Naive thymus-derived CD4-positive, alpha-beta T cell (primary cell): ENCODE measurements at regions of chr1 and their contacts with region 1.

Region 1: DNA sequence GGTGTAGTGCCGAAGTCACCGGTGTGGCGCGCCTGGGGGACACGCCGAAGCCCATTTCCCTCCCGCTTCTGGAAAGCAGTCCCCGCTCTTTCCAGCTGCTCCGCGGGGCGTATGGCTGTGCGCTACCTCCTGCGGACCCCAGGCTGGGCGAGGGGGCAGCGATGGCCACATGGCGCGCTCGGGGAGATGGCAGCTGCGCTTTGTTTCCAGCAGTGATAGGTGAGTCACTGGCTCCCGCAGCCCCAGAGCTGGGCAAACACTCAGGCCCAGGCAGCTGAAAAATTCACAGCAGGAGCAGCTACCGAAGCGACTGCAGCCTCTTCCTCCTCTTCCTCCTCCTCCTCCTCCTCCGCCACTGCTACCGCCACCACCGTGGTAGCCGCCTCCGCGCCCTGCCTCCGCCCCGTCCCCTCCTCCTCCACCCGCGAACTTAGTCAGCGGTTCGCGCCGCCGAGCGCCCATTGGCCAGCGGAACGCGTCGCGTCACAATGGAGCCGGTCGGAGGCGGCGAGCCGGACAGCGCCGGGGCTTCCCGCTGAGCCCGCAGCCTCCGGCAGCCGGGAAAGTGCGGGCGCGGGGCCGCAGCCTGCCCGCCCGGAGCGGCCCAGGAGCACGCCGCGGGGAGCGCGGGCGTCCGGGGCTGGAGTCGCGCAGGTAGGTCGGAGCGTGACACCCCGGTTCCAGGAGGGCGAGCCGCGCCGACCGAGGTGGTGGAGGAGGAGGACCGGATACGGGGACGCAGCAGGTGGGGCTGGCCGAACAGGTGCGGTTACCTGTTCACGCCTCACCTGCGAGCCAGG is at the start of gene LRRC8B:
- DNase-seq: peak; percentile 80 to 91 (median 86)
- ATAC-seq: peak; percentile 94
- H3K4me3 ChIP-seq: peak within 1 kb of the TSS; percentile 93
- H3K4me3 Mint-ChIP-seq: peak within 1 kb of the TSS in 1 of 10 donors; percentile 76
- H3K27ac ChIP-seq: peak within 1 kb of the TSS; percentile 92
- H3K27ac Mint-ChIP-seq: peak within 1 kb of the TSS in 8 of 9 donors; percentile 89 to 97 (median 94)
- H3K4me1 ChIP-seq: peaks cover 7 to 34% of the 10 kb centered on the region in 2 donors
- H3K4me1 Mint-ChIP-seq: peaks cover 11 to 31% (median 21%) of the 10 kb centered on the region in 7 donors
- H3K27me3 ChIP-seq: no peaks in the 10 kb centered on the region
- H3K27me3 Mint-ChIP-seq: no peaks in the 10 kb centered on the region
- total RNA-seq, gene LRRC8B: 8.8 to 23.0 (median 17.1) TPM

Region 2: GRCh38 chr1:88683541-88684481 is 840.8 kb before region 1 on chr1 and contains the start of gene PKN2:
- CTCF ChIA-PET with region 1: no interaction called
- POLR2A ChIA-PET with region 1: no interaction called
- intact Hi-C with region 1: loop called in 1 of 2 experiments (anchors 1 kb)
- DNase-seq: peak; percentile 94 to 98 (median 97)
- ATAC-seq: peak; percentile 96
- H3K4me3 ChIP-seq: peak within 1 kb of the TSS; percentile 91
- H3K4me3 Mint-ChIP-seq: peak within 1 kb of the TSS; percentile 89 to 99 (median 97)
- H3K27ac ChIP-seq: peak within 1 kb of the TSS; percentile 89
- H3K27ac Mint-ChIP-seq: peak within 1 kb of the TSS; percentile 96 to 100 (median 97)
- H3K4me1 ChIP-seq: peaks cover 18 to 19% of the 10 kb centered on the region in 2 donors
- H3K4me1 Mint-ChIP-seq: peaks cover 18 to 53% (median 36%) of the 10 kb centered on the region in 7 donors
- H3K27me3 ChIP-seq: no peaks in the 10 kb centered on the region
- H3K27me3 Mint-ChIP-seq: peaks cover 0 to 12% (median 0%) of the 10 kb centered on the region in 5 donors
- total RNA-seq, gene PKN2: 32.1 to 53.8 (median 46.9) TPM

Region 3: GRCh38 chr1:89125913-89126580 is 398.5 kb before region 1 on chr1 and contains the start of gene GBP2:
- CTCF ChIA-PET with region 1: no interaction called
- POLR2A ChIA-PET with region 1: no interaction called
- intact Hi-C with region 1: loop called in 1 of 2 experiments (anchors 2 kb)
- DNase-seq: peak in 7 of 9 donors; percentile 35 to 72 (median 42)
- ATAC-seq: peak; percentile 82
- H3K4me3 ChIP-seq: peak within 1 kb of the TSS; percentile 84
- H3K4me3 Mint-ChIP-seq: peak within 1 kb of the TSS; percentile 88 to 100 (median 98)
- H3K27ac ChIP-seq: peak within 1 kb of the TSS; percentile 76
- H3K27ac Mint-ChIP-seq: peak within 1 kb of the TSS; percentile 94 to 100 (median 99)
- H3K4me1 ChIP-seq: peaks cover 30 to 32% of the 10 kb centered on the region in 2 donors
- H3K4me1 Mint-ChIP-seq: peaks cover 39 to 75% (median 63%) of the 10 kb centered on the region in 7 donors
- H3K27me3 ChIP-seq: no peaks in the 10 kb centered on the region
- H3K27me3 Mint-ChIP-seq: peaks cover 0 to 2% (median 0%) of the 10 kb centered on the region in 5 donors
- total RNA-seq, gene GBP2: 74.0 to 200 (median 185) TPM

Region 4: GRCh38 chr1:89545264-89546038 is 20.9 kb after region 1 on chr1:
- CTCF ChIA-PET with region 1: interaction called, 5 read pairs
- POLR2A ChIA-PET with region 1: interaction called, 3 read pairs
- intact Hi-C with region 1: loop called in 1 of 2 experiments (anchors 1 kb)
- DNase-seq: peak in 3 of 9 donors; percentile 4 to 58 (median 49)
- ATAC-seq: peak; percentile 32
- H3K4me3 ChIP-seq: no peak overlapping the region
- H3K4me3 Mint-ChIP-seq: peak overlapping the region in 8 of 10 donors; percentile 3 to 68 (median 28)
- H3K27ac ChIP-seq: no peak overlapping the region
- H3K27ac Mint-ChIP-seq: peak overlapping the region in 4 of 9 donors; percentile 1 to 78 (median 32)
- H3K4me1 ChIP-seq: peaks cover 0 to 18% of the 10 kb centered on the region in 2 donors
- H3K4me1 Mint-ChIP-seq: peaks cover 37 to 87% (median 66%) of the 10 kb centered on the region in 7 donors
- H3K27me3 ChIP-seq: no peaks in the 10 kb centered on the region
- H3K27me3 Mint-ChIP-seq: no peaks in the 10 kb centered on the region

Region 5: GRCh38 chr1:89605692-89606091 is 81.1 kb after region 1 on chr1:
- CTCF ChIA-PET with region 1: interaction called, 9 read pairs
- POLR2A ChIA-PET with region 1: interaction called, 75 read pairs
- intact Hi-C with region 1: loop called (anchors 1 kb)
- DNase-seq: no peak
- ATAC-seq: no peak
- H3K4me3 ChIP-seq: peak overlapping the region; percentile 17
- H3K4me3 Mint-ChIP-seq: peak overlapping the region in 8 of 10 donors; percentile 52 to 96 (median 88)
- H3K27ac ChIP-seq: peak overlapping the region; percentile 92
- H3K27ac Mint-ChIP-seq: peak overlapping the region; percentile 97 to 100 (median 99)
- H3K4me1 ChIP-seq: peaks cover 82 to 85% of the 10 kb centered on the region in 2 donors
- H3K4me1 Mint-ChIP-seq: peaks cover 44 to 96% (median 93%) of the 10 kb centered on the region in 7 donors
- H3K27me3 ChIP-seq: no peaks in the 10 kb centered on the region
- H3K27me3 Mint-ChIP-seq: no peaks in the 10 kb centered on the region

Region 6: GRCh38 chr1:89987170-89987819 is 462.7 kb after region 1 on chr1:
- CTCF ChIA-PET with region 1: no interaction called
- POLR2A ChIA-PET with region 1: no interaction called
- intact Hi-C with region 1: loop called in 1 of 2 experiments (anchors 2 kb)
- DNase-seq: peak in 8 of 9 donors; percentile 48 to 76 (median 70)
- ATAC-seq: peak; percentile 97
- H3K4me3 ChIP-seq: no peak overlapping the region
- H3K4me3 Mint-ChIP-seq: no peak overlapping the region
- H3K27ac ChIP-seq: no peak overlapping the region
- H3K27ac Mint-ChIP-seq: no peak overlapping the region
- H3K4me1 ChIP-seq: no peaks in the 10 kb centered on the region
- H3K4me1 Mint-ChIP-seq: no peaks in the 10 kb centered on the region
- H3K27me3 ChIP-seq: no peaks in the 10 kb centered on the region
- H3K27me3 Mint-ChIP-seq: peaks cover 0 to 13% (median 4%) of the 10 kb centered on the region in 5 donors

Region 7: DNA sequence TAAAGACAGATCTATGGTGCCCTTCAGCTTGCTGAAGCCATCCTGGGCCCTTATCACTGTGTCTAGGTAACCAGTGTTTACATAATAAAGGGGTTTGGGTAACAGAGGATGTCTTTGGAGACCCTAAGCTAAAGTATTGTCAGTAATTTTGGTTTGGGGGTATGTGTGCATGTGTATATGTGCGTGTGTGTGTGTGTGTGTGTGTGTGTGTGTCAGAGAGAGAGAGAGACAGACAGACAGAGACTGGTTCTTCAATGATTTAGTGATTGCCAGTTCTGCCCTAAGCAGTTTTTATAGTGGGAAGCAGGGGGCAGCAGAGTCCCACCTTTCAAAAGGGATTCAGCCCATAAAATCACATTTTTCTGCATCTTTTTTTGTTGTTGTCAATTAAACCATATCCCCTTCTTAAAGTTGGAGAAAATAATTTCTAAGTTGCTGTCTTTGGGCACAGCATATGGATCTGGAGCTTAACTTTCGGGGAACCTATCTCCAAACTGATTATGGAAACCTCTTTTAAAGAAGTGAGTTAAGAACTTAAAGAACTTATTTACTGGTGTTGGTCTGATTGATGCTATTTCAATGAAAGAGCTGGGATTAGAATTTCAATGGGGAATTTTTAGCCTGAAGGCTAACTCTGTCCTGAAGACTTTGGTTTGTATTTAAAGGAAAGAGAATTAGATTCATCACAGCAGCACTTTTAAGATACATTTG is 521.4 kb after region 1 on chr1:
- CTCF ChIA-PET with region 1: no interaction called
- POLR2A ChIA-PET with region 1: no interaction called
- intact Hi-C with region 1: no loop called
- DNase-seq: peak in 4 of 9 donors; percentile 2 to 9 (median 6)
- ATAC-seq: peak; percentile 34
- H3K4me3 ChIP-seq: no peak overlapping the region
- H3K4me3 Mint-ChIP-seq: no peak overlapping the region
- H3K27ac ChIP-seq: no peak overlapping the region
- H3K27ac Mint-ChIP-seq: no peak overlapping the region
- H3K4me1 ChIP-seq: no peaks in the 10 kb centered on the region
- H3K4me1 Mint-ChIP-seq: no peaks in the 10 kb centered on the region
- H3K27me3 ChIP-seq: no peaks in the 10 kb centered on the region
- H3K27me3 Mint-ChIP-seq: peaks cover 0 to 26% (median 3%) of the 10 kb centered on the region in 5 donors